Sigmoid colon (tissue), 7 donors: ENCODE measurements at regions of chr4 and their contacts with region 1.

Region 1: DNA sequence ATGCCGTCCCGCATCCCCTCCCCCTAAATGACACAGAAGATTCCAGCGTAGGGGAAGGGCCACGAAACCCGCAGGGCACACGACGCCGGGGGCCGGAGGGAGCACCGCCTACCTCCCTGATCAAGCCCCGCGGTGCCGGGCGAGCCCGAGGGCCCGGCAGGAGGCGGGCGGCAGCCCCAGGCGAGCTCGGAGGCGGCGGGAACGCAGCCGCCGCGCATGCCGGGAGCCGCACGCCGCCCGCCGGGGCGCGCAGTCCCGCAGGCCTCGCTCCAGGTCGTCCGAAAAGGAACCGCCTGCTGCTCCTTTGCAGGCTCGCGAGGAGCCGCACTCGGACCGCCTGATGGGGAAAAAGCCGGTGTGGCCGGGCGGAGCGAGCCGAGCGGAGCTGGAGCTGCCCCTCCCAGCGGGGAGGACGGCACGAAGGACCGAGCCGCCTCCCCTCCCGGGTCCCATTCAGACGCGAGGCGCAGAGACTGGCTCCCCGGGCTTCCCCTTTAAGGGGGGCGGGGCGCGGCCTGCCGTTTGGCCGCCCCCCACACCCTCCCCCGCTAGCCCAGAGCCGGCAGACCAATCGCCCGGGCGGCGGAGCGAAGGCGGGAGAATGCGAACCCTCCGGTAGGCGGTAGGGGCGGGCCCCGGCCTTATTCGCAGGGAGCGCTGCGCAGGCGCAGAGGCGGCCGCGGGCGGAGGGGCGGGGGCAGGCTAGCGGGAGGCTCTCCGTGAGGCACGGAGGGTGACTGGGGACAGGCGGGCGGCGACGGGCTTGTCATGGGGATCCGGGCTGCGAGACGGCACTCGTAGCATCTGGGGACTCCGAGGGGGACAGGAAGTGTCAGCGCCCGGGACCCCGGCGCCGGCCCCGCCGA is 561 bp upstream of the ING2 start:
- DNase-seq: peak; percentile 99
- H3K4me3 ChIP-seq: peak overlapping the region; percentile 73 to 96 (median 92)
- H3K27ac ChIP-seq: peak overlapping the region; percentile 96 to 98 (median 97)
- H3K4me1 ChIP-seq: peaks cover 0 to 19% (median 14%) of the 10 kb centered on the region in 4 donors
- H3K27me3 ChIP-seq: no peaks in the 10 kb centered on the region
- CTCF ChIP-seq: no peak
- EP300 ChIP-seq: no peak
- POLR2A ChIP-seq: peak in 1 of 2 donors; percentile 65

Region 2: GRCh38 chr4:182917182-182918043 is 586.9 kb before region 1 on chr4 and contains the start of gene DCTD:
- intact Hi-C with region 1: loop called (anchors 10 kb)
- DNase-seq: peak; percentile 86
- H3K4me3 ChIP-seq: peak within 1 kb of the TSS; percentile 71 to 92 (median 82)
- H3K27ac ChIP-seq: peak within 1 kb of the TSS; percentile 93 to 96 (median 94)
- H3K4me1 ChIP-seq: peaks cover 0 to 36% (median 14%) of the 10 kb centered on the region in 4 donors
- H3K27me3 ChIP-seq: no peaks in the 10 kb centered on the region
- CTCF ChIP-seq: peak in 1 of 4 experiments; percentile 8
- EP300 ChIP-seq: no peak
- POLR2A ChIP-seq: peak in 1 of 2 donors; percentile 13
- total RNA-seq, gene DCTD: 35.2 to 48.2 (median 40.9) TPM

Region 3: DNA sequence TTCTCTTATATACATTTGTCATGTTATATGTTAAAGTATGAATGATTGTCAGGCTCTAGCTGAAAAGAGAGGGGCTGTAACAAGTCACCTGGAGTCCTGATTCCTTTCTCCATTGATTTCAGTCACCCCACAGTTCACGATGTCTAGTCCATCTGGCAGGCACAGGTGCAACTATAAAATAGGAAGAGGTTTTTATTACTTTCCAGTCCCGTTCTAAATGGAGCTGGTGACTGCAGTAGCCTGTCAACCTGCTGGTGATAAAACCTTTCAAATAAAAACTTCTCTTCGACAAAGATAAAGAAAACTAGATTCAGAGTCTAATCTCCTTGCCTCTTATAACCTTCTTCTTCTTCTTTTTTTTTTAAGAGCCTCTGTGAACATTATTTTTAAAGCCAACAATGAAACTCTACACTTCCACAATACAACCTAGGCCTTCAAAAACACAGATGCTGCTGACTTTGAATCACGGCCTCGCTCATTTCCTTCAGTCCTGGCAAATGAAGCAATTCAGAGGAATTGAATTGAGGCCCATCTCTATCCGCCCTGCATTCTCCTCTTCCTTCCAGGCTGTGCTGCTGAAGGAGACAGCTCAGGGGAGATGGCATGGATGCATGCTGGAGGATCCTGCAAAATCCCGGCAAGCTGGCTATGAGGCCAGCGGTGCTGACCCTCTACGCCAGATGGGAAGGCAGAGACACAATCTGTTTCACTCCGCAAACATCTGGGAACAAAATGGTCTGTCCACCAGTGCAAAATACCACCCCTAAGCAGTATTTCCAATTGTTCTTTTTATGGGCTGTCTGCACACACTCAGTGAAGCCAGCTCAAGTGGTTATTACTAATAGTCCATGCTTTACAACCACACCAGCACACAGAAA is 87.2 kb before region 1 on chr4:
- intact Hi-C with region 1: no loop called
- DNase-seq: no peak
- H3K4me3 ChIP-seq: no peak overlapping the region
- H3K27ac ChIP-seq: no peak overlapping the region
- H3K4me1 ChIP-seq: no peaks in the 10 kb centered on the region
- H3K27me3 ChIP-seq: no peaks in the 10 kb centered on the region
- CTCF ChIP-seq: no peak
- EP300 ChIP-seq: no peak
- POLR2A ChIP-seq: no peak

Region 4: GRCh38 chr4:183471946-183472708 is 32.2 kb before region 1 on chr4:
- intact Hi-C with region 1: loop called (anchors 1 kb)
- DNase-seq: peak; percentile 89
- H3K4me3 ChIP-seq: peak overlapping the region in 1 of 4 donors; percentile 8
- H3K27ac ChIP-seq: no peak overlapping the region
- H3K4me1 ChIP-seq: peaks cover 0 to 4% (median 0%) of the 10 kb centered on the region in 4 donors
- H3K27me3 ChIP-seq: no peaks in the 10 kb centered on the region
- CTCF ChIP-seq: peak; percentile 39 to 89 (median 79)
- EP300 ChIP-seq: no peak
- POLR2A ChIP-seq: no peak

Region 5: GRCh38 chr4:183659029-183659871 is 155.0 kb after region 1 on chr4 and contains the starts of genes RWDD4 and TRAPPC11:
- intact Hi-C with region 1: loop called (anchors 1 kb)
- DNase-seq: peak; percentile 99
- H3K4me3 ChIP-seq: peak within 1 kb of the TSS; percentile 71 to 96 (median 93)
- H3K27ac ChIP-seq: peak within 1 kb of the TSS; percentile 90 to 96 (median 94)
- H3K4me1 ChIP-seq: peaks cover 0 to 29% (median 26%) of the 10 kb centered on the region in 4 donors
- H3K27me3 ChIP-seq: no peaks in the 10 kb centered on the region
- CTCF ChIP-seq: peak in 3 of 4 experiments; percentile 18 to 44 (median 33)
- EP300 ChIP-seq: no peak
- POLR2A ChIP-seq: peak; percentile 84 to 85
- total RNA-seq, gene RWDD4: 18.0 to 28.5 (median 21.7) TPM
- total RNA-seq, gene TRAPPC11: 32.1 to 58.2 (median 39.9) TPM

Region 6: DNA sequence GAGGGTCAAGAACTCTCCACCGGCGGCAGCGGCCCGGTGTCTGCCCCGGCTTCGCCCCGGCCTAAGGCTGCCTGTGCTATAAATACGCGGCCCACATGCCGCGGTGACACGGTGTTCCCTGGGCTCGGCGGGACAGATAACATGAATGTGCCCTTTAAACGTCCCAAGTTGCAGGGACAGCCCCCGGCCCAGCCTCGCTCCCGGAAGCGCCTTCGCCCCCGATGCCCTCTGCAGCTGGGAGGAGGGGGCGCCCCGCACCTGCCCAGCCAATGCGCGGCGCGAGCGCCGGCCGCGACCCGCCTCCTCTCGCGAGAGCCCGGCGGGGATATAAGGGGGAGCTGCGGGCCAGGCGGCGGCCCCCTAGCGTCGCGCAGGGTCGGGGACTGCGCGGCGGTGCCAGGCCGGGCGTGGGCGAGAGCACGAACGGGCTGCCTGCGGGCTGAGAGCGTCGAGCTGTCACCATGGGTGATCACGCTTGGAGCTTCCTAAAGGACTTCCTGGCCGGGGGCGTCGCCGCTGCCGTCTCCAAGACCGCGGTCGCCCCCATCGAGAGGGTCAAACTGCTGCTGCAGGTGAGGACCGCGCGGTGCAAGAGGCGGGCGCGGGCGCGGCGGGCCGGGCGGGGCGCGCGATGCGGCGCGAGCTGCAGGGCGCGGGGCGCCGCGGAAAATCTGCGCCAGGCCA is 1638.8 kb after region 1 on chr4 and contains the start of gene SLC25A4:
- intact Hi-C with region 1: loop called (anchors 10 kb)
- DNase-seq: peak; percentile 94
- H3K4me3 ChIP-seq: peak within 1 kb of the TSS; percentile 60 to 81 (median 78)
- H3K27ac ChIP-seq: peak within 1 kb of the TSS; percentile 88 to 98 (median 94)
- H3K4me1 ChIP-seq: peaks cover 0 to 41% (median 34%) of the 10 kb centered on the region in 4 donors
- H3K27me3 ChIP-seq: no peaks in the 10 kb centered on the region
- CTCF ChIP-seq: peak in 3 of 4 experiments; percentile 15 to 57 (median 50)
- EP300 ChIP-seq: peak in 1 of 4 donors; percentile 7
- POLR2A ChIP-seq: peak; percentile 62
- total RNA-seq, gene SLC25A4: 89.1 to 127 (median 112) TPM